ENCODE measurements at regions of chr2 and their contacts with region 1.

Region 1: GRCh38 chr2:212254339-212254738 is 284.3 kb downstream of the ERBB4 start:
- DNase-seq: no peak
- ATAC-seq: no peak
- H3K4me3 ChIP-seq: no peak overlapping the region
- H3K27ac ChIP-seq: no peak overlapping the region
- H3K4me1 ChIP-seq: no peaks in the 10 kb centered on the region
- H3K27me3 ChIP-seq: no peaks in the 10 kb centered on the region

Region 2: DNA sequence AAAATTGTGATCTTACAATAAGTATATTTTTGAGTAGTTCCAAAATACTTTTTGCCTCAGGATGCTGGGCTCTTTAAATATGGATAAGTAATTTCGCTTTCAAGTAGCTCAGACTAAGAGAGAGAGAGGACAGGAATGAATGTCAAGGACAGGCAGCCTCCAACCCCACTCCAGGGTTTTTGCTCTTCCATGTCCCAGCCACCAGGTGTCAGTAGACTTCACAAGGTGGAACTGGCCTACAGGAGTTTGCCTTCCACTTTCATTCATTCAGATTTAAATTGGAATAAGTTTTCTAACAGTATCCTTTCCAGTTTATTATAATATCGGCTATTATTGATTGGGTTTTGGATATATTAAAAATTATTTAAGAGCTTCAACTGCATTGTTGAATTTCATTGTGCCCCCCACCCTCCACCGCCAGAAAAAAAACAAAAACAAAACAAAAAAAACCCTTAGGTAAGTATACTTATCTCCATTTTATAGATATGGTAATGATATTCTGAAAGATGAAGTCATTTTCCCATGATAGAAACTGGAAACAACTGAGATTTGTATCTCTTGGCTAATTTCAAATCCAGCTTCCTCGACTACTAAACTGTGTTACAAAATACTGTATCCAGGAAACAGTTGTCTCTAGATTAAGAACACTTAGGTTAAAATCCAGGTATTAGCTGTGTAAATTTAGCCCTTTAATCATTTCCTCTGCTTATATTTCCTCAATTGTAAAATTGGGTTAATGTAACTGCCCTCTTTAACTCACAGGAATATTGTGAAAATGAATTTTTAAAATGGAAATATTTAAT is 508.8 kb before region 1 on chr2:
- intact Hi-C with region 1: loop called in 1 of 2 experiments (anchors 10 kb)
- DNase-seq: no peak
- ATAC-seq: peak; percentile 76
- H3K4me3 ChIP-seq: no peak overlapping the region
- H3K27ac ChIP-seq: no peak overlapping the region
- H3K4me1 ChIP-seq: no peaks in the 10 kb centered on the region
- H3K27me3 ChIP-seq: no peaks in the 10 kb centered on the region

Region 3: DNA sequence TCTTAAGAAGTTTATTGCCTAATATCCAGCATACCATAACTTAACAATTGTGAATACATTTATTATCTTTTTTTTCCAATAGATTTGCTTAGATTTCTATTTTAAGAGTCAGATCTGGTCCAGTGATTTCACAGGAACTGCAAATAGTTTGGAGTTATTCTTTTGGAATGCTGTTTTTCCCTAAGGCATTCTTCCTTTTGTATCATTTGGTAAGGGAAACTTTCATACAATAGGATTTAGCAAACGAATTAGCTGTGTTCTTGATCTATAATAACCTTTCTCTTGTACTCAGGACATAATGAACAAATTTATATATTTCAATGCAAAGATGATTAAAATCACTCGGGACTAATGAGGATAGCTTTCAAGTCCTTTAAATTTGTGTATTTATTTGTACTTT is 82.7 kb after region 1 on chr2:
- intact Hi-C with region 1: no loop called
- DNase-seq: no peak
- ATAC-seq: no peak
- H3K4me3 ChIP-seq: peak overlapping the region in 1 of 2 donors; percentile 10
- H3K27ac ChIP-seq: no peak overlapping the region
- H3K4me1 ChIP-seq: peaks cover 0 to 3% of the 10 kb centered on the region in 2 donors
- H3K27me3 ChIP-seq: no peaks in the 10 kb centered on the region